ENCODE measurements at regions of chr17 and their contacts with region 1.

Region 1: DNA sequence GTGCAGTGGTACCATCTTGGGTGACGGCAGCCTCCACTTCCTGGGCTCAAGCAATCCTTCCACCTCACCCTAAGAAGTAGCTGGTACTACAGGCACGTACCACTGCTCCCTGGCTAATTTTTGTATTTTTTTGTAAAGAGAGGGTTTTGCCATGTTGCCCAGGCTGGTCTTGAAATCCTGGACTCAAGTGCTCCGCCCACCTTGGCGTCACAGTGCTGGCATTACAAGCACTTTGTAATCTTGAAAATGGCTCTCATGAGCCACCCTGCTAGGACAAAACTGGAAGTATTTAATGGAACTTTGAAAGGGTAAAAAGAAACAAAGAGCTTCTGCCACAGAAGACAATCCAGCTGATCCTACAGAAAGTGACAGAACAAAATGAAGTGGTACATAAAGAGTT is 9.2 kb downstream of the SUMO2 start:
- DNase-seq: no peak
- H3K4me3 Mint-ChIP-seq: no peak overlapping the region
- H3K27ac Mint-ChIP-seq: peak overlapping the region; percentile 39
- H3K4me1 Mint-ChIP-seq: peaks cover 15% of the 10 kb centered on the region
- H3K27me3 Mint-ChIP-seq: no peaks in the 10 kb centered on the region

Region 2: DNA sequence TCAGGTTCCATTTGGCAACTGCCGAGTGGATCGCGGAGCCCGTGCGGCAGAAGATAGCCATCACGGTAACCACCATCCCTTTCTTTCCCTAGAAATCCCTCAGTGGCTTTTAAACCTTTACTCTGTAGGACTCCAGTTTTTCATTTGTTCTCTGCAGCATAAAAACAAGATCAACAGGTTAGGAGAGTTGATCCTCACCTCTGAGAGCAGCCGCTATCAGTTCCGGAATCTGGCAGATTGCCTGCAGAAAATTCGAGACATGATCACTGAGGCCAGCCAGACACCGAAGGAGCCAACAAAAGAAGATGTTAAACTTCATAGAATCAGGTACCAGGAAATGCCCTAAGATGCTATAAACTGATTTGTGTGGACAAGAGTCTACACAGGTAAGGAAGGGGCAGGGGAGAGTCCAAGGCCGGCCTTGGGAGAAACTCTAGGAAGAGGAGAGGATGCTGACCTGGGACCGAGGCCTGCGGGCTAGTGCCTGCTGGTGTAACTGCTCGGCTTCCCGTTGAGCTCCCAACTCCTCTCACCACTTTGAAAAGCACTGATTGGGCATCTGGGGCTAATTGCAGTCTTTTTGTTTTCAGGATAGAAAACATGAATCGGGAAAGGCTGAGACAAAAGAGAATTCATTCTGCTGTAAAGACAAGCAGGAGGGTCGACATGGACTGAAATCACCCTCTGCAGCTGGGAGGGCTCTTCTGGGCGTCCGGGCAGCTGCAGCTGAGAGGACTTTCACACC is 153.0 kb before region 1 on chr17:
- CTCF ChIA-PET with region 1: no interaction called
- POLR2A ChIA-PET with region 1: no interaction called
- intact Hi-C with region 1: no loop called
- DNase-seq: no peak
- H3K4me3 Mint-ChIP-seq: no peak overlapping the region
- H3K27ac Mint-ChIP-seq: no peak overlapping the region
- H3K4me1 Mint-ChIP-seq: peaks cover 10% of the 10 kb centered on the region
- H3K27me3 Mint-ChIP-seq: no peaks in the 10 kb centered on the region

Region 3: DNA sequence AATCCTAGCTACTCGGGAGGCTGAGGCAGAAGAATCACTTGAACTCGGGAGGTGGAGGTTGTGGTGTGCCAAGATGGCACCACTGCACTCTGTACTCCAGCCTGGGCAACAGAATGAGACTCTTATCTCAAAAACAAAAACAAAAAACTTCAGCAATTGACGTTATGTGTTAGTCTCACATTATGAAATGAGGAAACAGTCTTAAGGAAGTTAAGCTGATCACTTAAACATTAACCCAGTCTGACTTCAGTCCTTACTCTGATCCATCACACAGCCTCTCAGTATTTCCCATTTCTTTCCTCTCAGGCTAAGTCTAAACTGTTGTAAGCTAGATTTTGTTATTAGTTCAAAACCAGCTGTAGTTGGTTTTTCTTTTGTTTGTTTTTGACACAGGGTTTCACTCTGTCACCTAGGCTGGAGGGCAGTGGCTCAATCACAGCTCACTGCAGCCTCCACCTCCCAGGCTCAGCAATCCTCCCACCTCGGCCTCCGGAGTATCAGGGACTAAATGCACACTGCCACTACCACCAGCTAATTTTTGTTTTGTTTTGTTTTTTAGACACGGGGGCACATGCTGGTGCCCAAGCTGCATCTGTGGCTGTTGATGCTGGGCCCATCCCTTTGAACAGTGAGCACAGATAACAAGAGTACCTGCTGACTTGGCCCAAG is 25.5 kb before region 1 on chr17:
- CTCF ChIA-PET with region 1: interaction called, 17 read pairs
- POLR2A ChIA-PET with region 1: no interaction called
- intact Hi-C with region 1: no loop called
- DNase-seq: no peak
- H3K4me3 Mint-ChIP-seq: no peak overlapping the region
- H3K27ac Mint-ChIP-seq: no peak overlapping the region
- H3K4me1 Mint-ChIP-seq: peaks cover 27% of the 10 kb centered on the region
- H3K27me3 Mint-ChIP-seq: no peaks in the 10 kb centered on the region

Region 4: GRCh38 chr17:75154195-75155106 is 19.1 kb before region 1 on chr17 and contains the start of gene JPT1:
- CTCF ChIA-PET with region 1: interaction called, 17 read pairs
- POLR2A ChIA-PET with region 1: interaction called, 10 read pairs
- intact Hi-C with region 1: no loop called
- DNase-seq: peak; percentile 99
- H3K4me3 Mint-ChIP-seq: peak within 1 kb of the TSS; percentile 95
- H3K27ac Mint-ChIP-seq: peak within 1 kb of the TSS; percentile 86
- H3K4me1 Mint-ChIP-seq: peaks cover 34% of the 10 kb centered on the region
- H3K27me3 Mint-ChIP-seq: no peaks in the 10 kb centered on the region
- total RNA-seq, gene JPT1: 263 to 267 TPM

Region 5: DNA sequence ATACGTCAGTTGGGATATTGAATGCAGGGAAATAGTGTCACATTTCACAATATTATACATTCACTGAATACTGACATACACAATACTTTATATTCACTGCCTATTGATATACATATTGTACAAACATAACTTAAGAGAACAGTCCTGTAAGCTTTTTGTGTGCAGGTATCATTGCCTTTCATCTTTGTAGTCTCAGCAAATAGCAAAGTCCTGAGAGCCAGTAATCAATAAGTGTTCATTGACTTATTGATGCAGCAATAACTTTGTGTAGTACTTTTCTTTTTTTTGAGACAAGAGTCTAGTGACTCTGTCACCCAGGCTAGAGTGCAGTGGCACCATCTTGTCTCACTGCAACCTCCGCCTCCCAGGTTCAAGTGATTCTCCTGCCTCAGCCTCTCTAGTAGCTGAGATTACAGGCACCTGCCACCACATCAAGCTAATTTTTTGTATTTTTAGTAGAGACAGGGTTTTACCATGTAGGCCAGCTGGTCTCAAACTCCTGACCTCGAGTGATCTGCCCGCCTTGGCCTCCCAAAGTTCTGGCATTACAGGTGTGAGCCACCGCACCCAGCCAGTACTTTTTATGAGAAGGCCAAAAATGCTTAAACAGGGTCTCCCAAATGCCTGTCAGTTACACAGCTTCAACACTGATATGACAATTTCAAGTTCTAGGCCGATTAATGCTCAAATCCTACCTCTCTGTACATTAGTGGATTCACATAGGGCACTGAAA is 26.5 kb after region 1 on chr17:
- CTCF ChIA-PET with region 1: interaction called, 57 read pairs
- POLR2A ChIA-PET with region 1: no interaction called
- intact Hi-C with region 1: no loop called
- DNase-seq: no peak
- H3K4me3 Mint-ChIP-seq: no peak overlapping the region
- H3K27ac Mint-ChIP-seq: no peak overlapping the region
- H3K4me1 Mint-ChIP-seq: peaks cover 7% of the 10 kb centered on the region
- H3K27me3 Mint-ChIP-seq: no peaks in the 10 kb centered on the region

Measured in activated CD4-positive, alpha-beta memory T cell treated with anti-CD3 and anti-CD28 coated beads for 36 hours (primary cell).